AG04449 (cell line): ENCODE measurements at regions of chr5 and their contacts with region 1.

Region 1: DNA sequence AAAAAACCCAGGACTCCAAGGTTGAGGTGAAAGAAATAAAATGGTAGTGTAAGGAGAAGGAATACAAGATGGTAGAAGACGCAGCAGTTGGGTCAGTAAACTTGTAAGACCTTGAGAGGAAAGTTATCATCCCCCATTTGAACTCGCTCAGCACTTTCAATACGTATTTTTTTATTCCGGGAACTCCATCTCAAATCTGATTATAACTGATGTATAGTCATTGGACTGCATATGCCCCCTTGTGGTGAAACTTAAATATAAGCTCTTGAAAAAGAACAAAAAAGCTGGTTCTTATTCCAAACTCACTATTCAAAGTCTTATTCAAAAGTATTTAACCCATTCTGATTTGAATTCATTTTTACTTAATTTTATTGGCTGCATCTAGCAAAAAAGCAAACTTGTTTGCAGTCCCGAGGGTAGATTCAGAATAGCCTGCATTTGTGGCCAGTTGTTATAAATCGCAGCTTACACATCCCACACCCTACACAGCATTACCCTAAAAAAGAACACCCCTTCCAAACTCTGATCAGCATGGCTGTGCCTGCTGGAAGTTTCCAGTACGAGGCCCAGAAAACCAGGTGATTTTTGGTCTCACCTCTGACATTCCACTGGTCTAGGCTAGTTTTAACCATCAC is 118.0 kb downstream of the ESM1 start:
- DNase-seq: no peak
- H3K4me3 ChIP-seq: no peak overlapping the region
- CTCF ChIP-seq: peak; percentile 9

Region 2: GRCh38 chr5:54243473-54244080 is 623.9 kb before region 1 on chr5:
- CTCF ChIA-PET with region 1: interaction called, 28 read pairs
- POLR2A ChIA-PET with region 1: no interaction called
- DNase-seq: no peak
- H3K4me3 ChIP-seq: no peak overlapping the region
- CTCF ChIP-seq: peak; percentile 53

Region 3: GRCh38 chr5:54443270-54443669 is 424.2 kb before region 1 on chr5:
- CTCF ChIA-PET with region 1: interaction called, 17 read pairs
- POLR2A ChIA-PET with region 1: no interaction called
- DNase-seq: no peak
- H3K4me3 ChIP-seq: no peak overlapping the region
- CTCF ChIP-seq: peak; percentile 35

Region 4: DNA sequence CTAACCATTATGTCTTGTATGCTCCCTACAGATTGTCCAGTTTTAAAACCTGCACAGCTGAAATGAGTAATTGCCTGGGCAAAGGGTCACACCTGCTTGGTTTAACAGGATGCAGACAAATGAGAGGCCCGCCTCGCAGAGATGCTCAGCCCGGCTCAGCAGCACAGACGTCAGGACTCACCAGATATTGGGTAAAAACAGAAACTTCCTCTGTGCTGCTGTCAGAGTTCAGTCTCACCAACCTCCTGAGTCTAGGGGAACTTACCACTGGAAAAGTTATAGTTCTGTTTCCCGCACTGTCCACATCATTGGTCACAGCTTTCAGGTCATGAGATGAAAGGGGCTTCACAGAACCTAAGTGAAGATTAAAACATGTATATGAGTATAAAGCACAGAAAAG is 34.6 kb before region 1 on chr5:
- CTCF ChIA-PET with region 1: interaction called, 10 read pairs
- POLR2A ChIA-PET with region 1: no interaction called
- DNase-seq: no peak
- H3K4me3 ChIP-seq: no peak overlapping the region
- CTCF ChIP-seq: no peak

Region 5: GRCh38 chr5:54852007-54852406 is 15.4 kb before region 1 on chr5:
- CTCF ChIA-PET with region 1: interaction called, 20 read pairs
- POLR2A ChIA-PET with region 1: no interaction called
- DNase-seq: no peak
- H3K4me3 ChIP-seq: no peak overlapping the region
- CTCF ChIP-seq: no peak

Region 6: DNA sequence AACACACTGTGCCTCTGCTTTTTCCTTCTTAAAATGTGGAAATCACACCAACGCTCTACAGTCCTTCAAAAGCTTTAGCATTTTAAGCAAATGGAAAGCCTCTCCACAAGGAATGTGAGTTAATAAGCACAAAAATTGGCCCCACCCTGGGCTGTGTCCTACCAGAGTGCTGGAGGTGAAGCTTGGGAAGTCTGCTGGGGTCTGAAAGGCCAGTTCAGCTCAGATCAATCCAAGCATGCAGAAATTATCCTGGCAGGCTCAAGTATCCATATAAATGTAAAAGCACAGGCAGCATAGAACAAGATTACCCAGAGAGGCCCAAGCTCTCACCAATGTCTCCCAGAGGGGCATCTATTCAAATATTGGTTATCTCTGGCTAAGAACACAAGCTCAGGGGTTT is 19.4 kb after region 1 on chr5:
- CTCF ChIA-PET with region 1: interaction called, 13 read pairs
- POLR2A ChIA-PET with region 1: no interaction called
- DNase-seq: no peak
- H3K4me3 ChIP-seq: no peak overlapping the region
- CTCF ChIP-seq: no peak

Region 7: DNA sequence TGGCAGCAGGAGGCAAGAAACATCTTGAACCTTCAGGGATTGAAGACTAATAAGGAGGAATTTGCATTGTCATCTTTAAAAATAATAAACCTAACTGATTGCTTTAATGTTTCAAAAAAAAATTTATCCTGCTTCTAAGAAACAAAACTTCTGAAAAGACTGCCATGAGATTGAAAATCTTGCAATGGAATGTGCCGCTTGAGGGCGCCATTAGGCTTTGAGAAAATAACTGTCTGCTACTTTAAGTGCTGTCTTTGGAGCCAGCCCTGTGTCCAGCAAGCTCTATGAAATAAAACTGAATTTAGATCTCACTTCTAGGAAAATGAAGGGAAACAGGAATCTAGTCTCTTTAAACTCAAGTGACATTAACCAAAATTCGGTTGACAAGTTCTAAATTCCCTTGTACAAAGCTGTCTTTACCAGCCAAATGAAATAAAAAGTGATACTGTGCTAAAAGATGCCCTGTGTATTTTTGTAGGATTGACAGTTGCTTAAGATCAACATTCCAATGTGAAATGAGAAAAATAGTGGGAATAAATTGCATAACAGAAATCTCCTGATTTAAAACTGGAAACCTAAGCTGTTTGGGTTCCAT is 38.6 kb after region 1 on chr5:
- CTCF ChIA-PET with region 1: interaction called, 20 read pairs
- POLR2A ChIA-PET with region 1: no interaction called
- DNase-seq: no peak
- H3K4me3 ChIP-seq: no peak overlapping the region
- CTCF ChIP-seq: peak; percentile 54